ENCODE measurements at regions of chr19 and their contacts with region 1.

Region 1: GRCh38 chr19:1855040-1855827 is 7.0 kb upstream of the REXO1 start:
- DNase-seq: peak; percentile 61
- H3K4me3 ChIP-seq: peak overlapping the region; percentile 52
- H3K27ac ChIP-seq: peak overlapping the region; percentile 52
- H3K27me3 ChIP-seq: no peaks in the 10 kb centered on the region
- CTCF ChIP-seq: no peak

Region 2: GRCh38 chr19:1923319-1923718 is 68.1 kb after region 1 on chr19:
- CTCF ChIA-PET with region 1: no interaction called
- POLR2A ChIA-PET with region 1: interaction called, 11 read pairs
- DNase-seq: no peak
- H3K4me3 ChIP-seq: no peak overlapping the region
- H3K27ac ChIP-seq: no peak overlapping the region
- H3K27me3 ChIP-seq: no peaks in the 10 kb centered on the region
- CTCF ChIP-seq: no peak

Region 3: GRCh38 chr19:2016041-2016807 is 161.0 kb after region 1 on chr19:
- CTCF ChIA-PET with region 1: no interaction called
- POLR2A ChIA-PET with region 1: interaction called, 14 read pairs
- DNase-seq: peak; percentile 63
- H3K4me3 ChIP-seq: peak overlapping the region; percentile 57
- H3K27ac ChIP-seq: no peak overlapping the region
- H3K27me3 ChIP-seq: no peaks in the 10 kb centered on the region
- CTCF ChIP-seq: no peak